BJ (cell line): ENCODE measurements at regions of chr3 and their contacts with region 1.

Region 1: GRCh38 chr3:196388956-196389355 is 43.3 kb downstream of the UBXN7 start:
- DNase-seq: no peak
- H3K4me3 ChIP-seq: no peak overlapping the region
- H3K27me3 ChIP-seq: no peaks in the 10 kb centered on the region
- CTCF ChIP-seq: no peak

Region 2: DNA sequence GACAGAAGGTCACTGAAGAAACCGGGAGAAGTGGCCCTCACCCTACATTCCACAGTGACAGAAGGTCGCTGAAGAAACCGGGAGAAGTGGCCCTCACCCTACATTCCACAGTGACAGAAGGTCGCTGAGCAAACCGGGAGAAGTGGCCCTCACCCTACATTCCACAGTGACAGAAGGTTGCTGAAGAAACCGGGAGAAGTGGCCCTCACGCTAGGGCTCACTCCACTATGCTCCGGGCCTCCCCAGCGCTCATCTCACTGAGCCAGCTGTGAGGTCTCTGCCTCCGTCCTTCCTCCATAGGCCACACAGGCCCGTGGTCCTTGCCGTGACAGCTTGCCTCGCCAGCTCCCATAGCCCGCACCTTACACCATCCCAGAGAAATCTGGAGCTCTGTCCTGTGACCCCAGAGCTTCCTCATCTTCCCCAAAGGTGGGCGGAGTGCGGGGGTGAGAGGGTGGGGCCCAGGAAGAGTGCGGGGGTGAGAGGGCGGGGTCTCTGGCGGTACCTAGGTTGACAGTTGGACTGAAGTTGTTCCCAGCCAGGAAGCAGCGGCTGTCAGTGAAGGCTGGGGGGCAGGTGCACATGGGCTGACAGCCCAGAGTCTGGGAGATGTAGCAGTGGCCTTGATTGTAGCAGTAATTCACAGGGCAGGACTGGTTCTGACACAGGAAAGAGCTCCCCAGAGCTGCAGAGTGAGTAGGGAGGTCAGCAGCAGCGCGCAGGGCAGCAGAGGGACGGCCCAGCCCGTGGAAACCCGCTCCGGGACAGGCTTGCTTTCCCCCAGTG is 636.2 kb before region 1 on chr3:
- CTCF ChIA-PET with region 1: no interaction called
- POLR2A ChIA-PET with region 1: no interaction called
- DNase-seq: no peak
- H3K4me3 ChIP-seq: no peak overlapping the region
- H3K27me3 ChIP-seq: peaks cover 11% of the 10 kb centered on the region
- CTCF ChIP-seq: no peak

Region 3: GRCh38 chr3:196047391-196048030 is 341.4 kb before region 1 on chr3:
- CTCF ChIA-PET with region 1: no interaction called
- POLR2A ChIA-PET with region 1: no interaction called
- DNase-seq: no peak
- H3K4me3 ChIP-seq: no peak overlapping the region
- H3K27me3 ChIP-seq: no peaks in the 10 kb centered on the region
- CTCF ChIP-seq: no peak

Region 4: DNA sequence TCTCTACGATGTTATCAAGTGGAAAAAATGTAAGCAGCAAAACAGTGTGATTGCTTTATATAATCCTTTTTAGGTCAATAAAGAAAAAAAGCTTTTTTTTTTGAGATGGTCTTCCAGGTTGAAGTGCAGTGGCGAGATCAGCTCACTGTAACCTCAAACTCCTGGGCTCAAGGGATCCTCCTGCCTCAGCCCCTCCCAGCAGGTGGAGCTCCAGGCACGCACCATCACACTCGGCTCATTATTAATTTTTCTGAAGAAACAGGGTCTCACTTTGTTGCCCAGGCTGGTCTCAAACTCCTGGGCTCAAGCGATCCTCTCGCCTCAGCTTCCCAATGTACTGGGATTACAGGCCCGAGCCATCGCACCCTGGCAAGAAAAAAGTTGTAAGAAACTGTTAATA is 97.3 kb after region 1 on chr3:
- CTCF ChIA-PET with region 1: no interaction called
- POLR2A ChIA-PET with region 1: interaction called, 19 read pairs
- DNase-seq: no peak
- H3K4me3 ChIP-seq: no peak overlapping the region
- H3K27me3 ChIP-seq: no peaks in the 10 kb centered on the region
- CTCF ChIP-seq: peak; percentile 37; the same call in 1 of the 2 replicates